ENCODE measurements at regions of chr11 and their contacts with region 1.

Region 1: GRCh38 chr11:299951-300735 is 817 bp upstream of the IFITM5 start:
- DNase-seq: peak in 1 of 9 donors; percentile 52
- ATAC-seq: peak; percentile 57
- H3K4me3 ChIP-seq: no peak overlapping the region
- H3K4me3 Mint-ChIP-seq: no peak overlapping the region
- H3K27ac ChIP-seq: no peak overlapping the region
- H3K27ac Mint-ChIP-seq: peak overlapping the region in 6 of 9 donors; percentile 7 to 78 (median 51)
- H3K4me1 ChIP-seq: peaks cover 19 to 31% of the 10 kb centered on the region in 2 donors
- H3K4me1 Mint-ChIP-seq: peaks cover 15 to 48% (median 22%) of the 10 kb centered on the region in 7 donors
- H3K27me3 ChIP-seq: no peaks in the 10 kb centered on the region
- H3K27me3 Mint-ChIP-seq: peaks cover 0 to 12% (median 0%) of the 10 kb centered on the region in 5 donors

Region 2: DNA sequence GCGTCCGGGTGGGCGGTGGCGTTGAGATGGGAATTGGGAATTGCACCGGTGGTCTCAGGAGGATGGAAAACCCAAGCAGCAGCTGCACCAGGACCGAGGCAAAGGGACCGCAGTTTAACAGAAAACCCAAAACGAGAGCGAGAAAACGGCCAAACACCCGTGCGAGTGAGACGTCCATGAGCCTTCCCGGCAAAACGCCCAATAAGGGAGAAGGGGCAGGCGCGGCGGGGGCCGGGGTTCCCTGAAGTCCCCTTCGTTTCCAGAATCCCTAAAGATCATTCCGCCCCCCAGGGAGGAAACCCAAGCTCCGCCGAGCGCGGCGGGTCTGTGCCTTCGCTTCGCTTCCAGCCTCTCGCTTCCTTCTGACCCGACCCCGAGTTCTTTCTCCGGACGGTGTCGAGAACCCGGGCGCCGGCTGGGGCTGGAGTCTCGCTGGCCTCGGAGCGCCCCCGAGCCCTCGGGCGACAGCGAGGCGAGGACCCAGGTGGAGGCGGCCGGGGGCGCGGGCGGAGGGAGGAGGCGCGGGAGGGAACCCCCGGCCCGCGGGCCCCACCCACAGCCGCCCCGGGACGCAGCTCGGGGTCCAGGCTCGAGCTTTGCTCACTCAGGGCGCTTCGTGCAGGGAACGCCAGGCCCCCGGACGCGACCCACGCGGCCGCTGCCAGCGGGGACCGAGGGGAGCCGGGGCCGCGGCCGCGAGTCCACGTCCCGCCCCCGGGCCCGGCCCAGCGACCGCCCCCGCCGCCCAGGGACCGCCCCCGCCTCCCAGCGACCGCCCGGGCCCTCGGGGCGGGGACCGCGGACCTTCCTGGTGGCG is 11.6 kb before region 1 on chr11 and contains the start of gene PGGHG:
- CTCF ChIA-PET with region 1: interaction called, 4 read pairs
- POLR2A ChIA-PET with region 1: interaction called, 24 read pairs
- intact Hi-C with region 1: no loop called
- DNase-seq: peak in 5 of 9 donors; percentile 40 to 72 (median 49)
- ATAC-seq: peak; percentile 65
- H3K4me3 ChIP-seq: peak within 1 kb of the TSS; percentile 64
- H3K4me3 Mint-ChIP-seq: peak within 1 kb of the TSS; percentile 88 to 100 (median 98)
- H3K27ac ChIP-seq: peak within 1 kb of the TSS; percentile 100
- H3K27ac Mint-ChIP-seq: peak within 1 kb of the TSS; percentile 89 to 100 (median 98)
- H3K4me1 ChIP-seq: peaks cover 16% of the 10 kb centered on the region in 2 donors
- H3K4me1 Mint-ChIP-seq: peaks cover 22 to 52% (median 38%) of the 10 kb centered on the region in 7 donors
- H3K27me3 ChIP-seq: no peaks in the 10 kb centered on the region
- H3K27me3 Mint-ChIP-seq: peaks cover 0 to 14% (median 0%) of the 10 kb centered on the region in 5 donors
- total RNA-seq, gene PGGHG: 325 to 656 (median 348) TPM

Region 3: DNA sequence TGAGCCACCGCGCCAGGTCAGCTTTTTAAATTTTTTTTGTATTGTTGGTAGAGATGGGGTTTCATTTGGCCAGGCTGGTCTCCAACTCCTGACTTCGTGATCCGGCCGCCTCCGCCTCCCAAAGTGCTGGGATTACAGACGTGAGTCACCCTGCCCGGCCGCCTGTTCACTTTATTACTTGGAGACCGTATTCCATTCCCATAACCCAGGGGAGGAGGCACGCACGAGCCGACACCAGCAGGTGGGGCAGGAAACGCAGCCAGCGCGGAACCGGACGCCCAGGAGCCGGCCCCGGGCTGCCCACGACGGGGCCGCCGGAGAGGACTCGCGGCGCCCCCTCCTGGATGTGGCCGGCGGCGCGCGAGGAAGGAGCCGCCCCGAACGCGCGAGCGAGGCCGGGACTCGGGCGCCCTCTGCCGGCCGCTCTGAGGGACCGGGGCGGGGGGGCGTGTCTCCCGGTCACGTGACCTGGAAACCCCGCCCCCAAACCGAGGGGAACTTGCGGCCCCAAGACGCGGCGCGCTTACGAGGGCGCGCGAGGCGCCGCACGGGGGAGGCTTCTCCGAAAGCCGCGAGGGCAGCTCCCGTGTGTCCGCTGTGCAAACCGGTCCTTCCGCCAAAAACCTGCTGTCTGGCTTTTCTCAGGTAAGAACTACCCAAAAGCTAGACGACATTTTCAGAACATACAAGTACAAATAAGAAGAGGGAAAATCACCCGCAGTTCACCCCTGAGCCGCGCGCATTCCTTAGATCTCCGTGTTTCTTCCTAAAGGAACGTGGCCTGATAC is 218.5 kb after region 1 on chr11:
- CTCF ChIA-PET with region 1: no interaction called
- POLR2A ChIA-PET with region 1: no interaction called
- intact Hi-C with region 1: no loop called
- DNase-seq: peak; percentile 69 to 94 (median 87)
- ATAC-seq: peak; percentile 99
- H3K4me3 ChIP-seq: peak overlapping the region; percentile 28
- H3K4me3 Mint-ChIP-seq: peak overlapping the region; percentile 81 to 91 (median 87)
- H3K27ac ChIP-seq: peak overlapping the region; percentile 58
- H3K27ac Mint-ChIP-seq: peak overlapping the region; percentile 70 to 92 (median 85)
- H3K4me1 ChIP-seq: peaks cover 4% of the 10 kb centered on the region in 2 donors
- H3K4me1 Mint-ChIP-seq: peaks cover 2 to 8% (median 4%) of the 10 kb centered on the region in 7 donors
- H3K27me3 ChIP-seq: no peaks in the 10 kb centered on the region
- H3K27me3 Mint-ChIP-seq: no peaks in the 10 kb centered on the region

Region 4: DNA sequence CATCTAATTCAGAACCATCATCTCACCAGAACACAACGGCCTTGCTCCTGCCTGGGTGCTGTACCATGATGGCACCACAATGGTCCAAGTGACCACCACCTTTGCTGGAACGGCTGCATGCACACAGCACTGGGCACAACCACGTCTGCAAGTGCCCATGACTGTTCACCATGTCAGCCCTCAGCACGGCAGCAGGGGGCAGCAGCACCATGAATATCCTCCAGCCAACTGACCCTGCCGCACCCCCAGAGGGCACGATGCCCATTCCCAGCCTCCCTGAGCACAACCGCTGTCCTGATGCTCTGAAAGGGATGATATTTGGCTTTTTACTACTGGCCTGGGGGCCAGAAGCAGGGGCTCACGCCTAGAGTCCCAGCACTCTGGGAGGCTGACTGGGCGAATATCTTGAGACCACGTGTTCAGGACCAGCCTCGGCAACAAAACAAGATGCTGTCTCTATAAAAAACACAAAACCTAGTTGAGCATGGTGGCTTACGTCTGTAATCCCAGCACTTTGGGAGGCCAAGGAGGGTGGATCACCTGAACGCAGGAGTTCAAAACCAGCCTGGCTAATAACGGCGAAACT is 362.6 kb after region 1 on chr11:
- CTCF ChIA-PET with region 1: no interaction called
- POLR2A ChIA-PET with region 1: no interaction called
- intact Hi-C with region 1: no loop called
- DNase-seq: peak in 6 of 9 donors; percentile 24 to 48 (median 32)
- ATAC-seq: peak; percentile 86
- H3K4me3 ChIP-seq: no peak overlapping the region
- H3K4me3 Mint-ChIP-seq: no peak overlapping the region
- H3K27ac ChIP-seq: no peak overlapping the region
- H3K27ac Mint-ChIP-seq: peak overlapping the region in 1 of 9 donors; percentile 46
- H3K4me1 ChIP-seq: no peaks in the 10 kb centered on the region
- H3K4me1 Mint-ChIP-seq: peaks cover 0 to 7% (median 2%) of the 10 kb centered on the region in 7 donors
- H3K27me3 ChIP-seq: no peaks in the 10 kb centered on the region
- H3K27me3 Mint-ChIP-seq: no peaks in the 10 kb centered on the region